Right cardiac atrium (tissue), 5 donors: ENCODE measurements at regions of chr6 and their contacts with region 1.

Region 1: GRCh38 chr6:132798869-132799538 is 567 bp upstream of the SLC18B1 start:
- DNase-seq: peak; percentile 70 to 85 (median 75)
- ATAC-seq: peak; percentile 88 to 91
- H3K4me3 ChIP-seq: peak overlapping the region; percentile 93
- H3K27ac ChIP-seq: no peak overlapping the region
- H3K4me1 ChIP-seq: no peaks in the 10 kb centered on the region
- H3K27me3 ChIP-seq: no peaks in the 10 kb centered on the region

Region 2: DNA sequence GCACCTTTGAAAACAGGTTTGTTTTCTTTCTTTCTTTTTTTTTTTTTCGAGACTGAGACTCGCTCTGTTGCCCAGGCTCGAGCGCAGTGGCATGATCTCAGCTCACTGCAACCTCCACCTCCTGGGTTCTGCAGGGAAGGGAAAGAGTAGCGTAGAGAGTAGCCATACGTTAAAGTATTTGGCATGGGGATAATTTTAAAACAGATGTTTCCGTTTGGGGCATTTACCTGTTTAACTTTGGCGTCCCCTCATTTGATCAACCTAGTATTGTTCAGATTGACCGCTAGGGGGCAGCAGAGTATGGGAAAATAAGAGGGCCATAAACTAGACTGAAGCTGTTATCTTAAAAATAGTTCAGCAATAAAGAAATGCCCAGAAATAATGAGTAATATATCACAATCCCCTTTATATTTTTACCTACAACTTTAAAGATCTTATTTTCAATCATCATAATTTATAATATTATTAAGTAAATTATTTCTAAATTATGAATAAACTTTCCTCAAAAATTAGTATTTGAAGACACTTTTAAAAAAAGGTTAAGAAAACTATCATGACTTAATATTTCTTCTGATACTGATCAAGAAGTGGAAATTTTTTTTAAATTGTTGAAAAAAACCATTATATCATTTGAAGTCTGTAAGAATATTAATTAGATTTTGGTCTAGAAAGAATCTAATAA is 268.6 kb before region 1 on chr6:
- intact Hi-C with region 1: loop called in 2 of 4 experiments (anchors 10 kb)
- DNase-seq: peak in 1 of 3 donors; percentile 39
- ATAC-seq: peak; percentile 70 to 72
- H3K4me3 ChIP-seq: no peak overlapping the region
- H3K27ac ChIP-seq: no peak overlapping the region
- H3K4me1 ChIP-seq: no peaks in the 10 kb centered on the region
- H3K27me3 ChIP-seq: no peaks in the 10 kb centered on the region

Region 3: GRCh38 chr6:132715204-132715603 is 83.8 kb before region 1 on chr6:
- intact Hi-C with region 1: no loop called
- DNase-seq: peak in 2 of 3 donors; percentile 28 to 76
- ATAC-seq: peak; percentile 43 to 78
- H3K4me3 ChIP-seq: no peak overlapping the region
- H3K27ac ChIP-seq: no peak overlapping the region
- H3K4me1 ChIP-seq: no peaks in the 10 kb centered on the region
- H3K27me3 ChIP-seq: no peaks in the 10 kb centered on the region